PC-3 (cell line): ENCODE measurements at regions of chr3 and their contacts with region 1.

Region 1: GRCh38 chr3:169348929-169349613 is 314.4 kb downstream of the MECOM start:
- DNase-seq: peak; percentile 97
- ATAC-seq: peak; percentile 85
- H3K4me3 ChIP-seq: peak overlapping the region; percentile 47
- H3K27ac ChIP-seq: peak overlapping the region; percentile 89
- H3K4me1 ChIP-seq: peaks cover 52% of the 10 kb centered on the region
- H3K27me3 ChIP-seq: no peaks in the 10 kb centered on the region
- CTCF ChIP-seq: no peak

Region 2: GRCh38 chr3:168878655-168879054 is 470.4 kb before region 1 on chr3:
- CTCF ChIA-PET with region 1: no interaction called
- POLR2A ChIA-PET with region 1: no interaction called
- intact Hi-C with region 1: loop called (anchors 10 kb)
- DNase-seq: peak; percentile 66
- ATAC-seq: peak; percentile 85
- H3K4me3 ChIP-seq: peak overlapping the region; percentile 8; the same call in 1 of the 2 replicates
- H3K27ac ChIP-seq: peak overlapping the region; percentile 73
- H3K4me1 ChIP-seq: peaks cover 56% of the 10 kb centered on the region
- H3K27me3 ChIP-seq: no peaks in the 10 kb centered on the region
- CTCF ChIP-seq: no peak

Region 3: GRCh38 chr3:169323578-169324451 is 25.3 kb before region 1 on chr3:
- CTCF ChIA-PET with region 1: no interaction called
- POLR2A ChIA-PET with region 1: no interaction called
- intact Hi-C with region 1: loop called (anchors 2 kb)
- DNase-seq: no peak
- ATAC-seq: no peak
- H3K4me3 ChIP-seq: no peak overlapping the region
- H3K27ac ChIP-seq: no peak overlapping the region
- H3K4me1 ChIP-seq: peaks cover 34% of the 10 kb centered on the region
- H3K27me3 ChIP-seq: no peaks in the 10 kb centered on the region
- CTCF ChIP-seq: no peak

Region 4: GRCh38 chr3:169509359-169509758 is 160.3 kb after region 1 on chr3:
- CTCF ChIA-PET with region 1: no interaction called
- POLR2A ChIA-PET with region 1: no interaction called
- intact Hi-C with region 1: loop called (anchors 5 kb)
- DNase-seq: no peak
- ATAC-seq: no peak; the same call in 1 of the 2 replicates
- H3K4me3 ChIP-seq: no peak overlapping the region
- H3K27ac ChIP-seq: no peak overlapping the region
- H3K4me1 ChIP-seq: no peaks in the 10 kb centered on the region
- H3K27me3 ChIP-seq: no peaks in the 10 kb centered on the region
- CTCF ChIP-seq: no peak

Region 5: GRCh38 chr3:169772897-169773828 is 424.1 kb after region 1 on chr3 and contains the start of gene MYNN:
- CTCF ChIA-PET with region 1: no interaction called
- POLR2A ChIA-PET with region 1: interaction called, 13 read pairs
- intact Hi-C with region 1: no loop called
- DNase-seq: peak; percentile 86
- ATAC-seq: peak; percentile 82
- H3K4me3 ChIP-seq: peak within 1 kb of the TSS; percentile 96
- H3K27ac ChIP-seq: peak within 1 kb of the TSS; percentile 90
- H3K4me1 ChIP-seq: peaks cover 16% of the 10 kb centered on the region
- H3K27me3 ChIP-seq: no peaks in the 10 kb centered on the region
- CTCF ChIP-seq: no peak
- total RNA-seq, gene MYNN: 7.4 and 12.9 TPM in 2 replicates